ENCODE measurements at regions of chr6 and their contacts with region 1.

Region 1: DNA sequence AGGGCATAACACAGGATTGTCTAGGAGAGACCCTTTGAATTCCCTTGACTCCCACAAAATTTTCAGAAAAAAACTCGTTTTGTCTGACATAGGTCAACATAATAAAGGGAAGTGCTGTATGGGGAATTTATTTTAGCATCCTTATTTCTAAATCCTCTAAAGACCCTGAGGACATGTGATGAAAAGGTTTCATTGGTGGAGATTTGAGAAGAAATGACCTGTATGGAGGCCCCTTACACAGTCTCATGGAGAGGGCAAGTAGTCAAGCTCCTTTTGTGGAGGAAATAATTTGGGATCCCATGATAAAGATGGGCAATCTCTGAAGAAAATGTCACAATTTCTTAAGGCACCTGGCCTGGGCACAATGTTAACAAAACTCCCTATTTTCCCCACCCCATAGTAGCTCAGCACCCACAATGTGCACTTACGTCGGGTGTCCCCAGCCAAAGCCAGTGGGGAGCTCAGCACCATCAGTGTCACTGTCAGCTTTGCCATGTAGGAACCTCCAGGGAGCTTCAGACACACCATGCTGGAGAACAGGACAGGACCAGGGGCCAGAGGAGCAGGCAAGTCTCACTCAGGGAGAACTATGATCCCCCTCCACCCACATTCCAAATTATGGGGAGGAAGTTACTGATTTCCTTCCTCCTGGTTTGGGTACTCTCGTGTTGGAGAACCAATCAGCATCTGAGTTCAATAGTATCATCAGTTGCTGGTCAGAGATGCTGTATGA is at the start of gene HLA-DRB5:
- DNase-seq: peak in 1 of 2 donors; percentile 45
- ATAC-seq: peak in 2 of 4 donors; percentile 37 to 61
- H3K4me3 ChIP-seq: no peak within 1 kb of the TSS
- H3K27ac ChIP-seq: no peak within 1 kb of the TSS
- H3K4me1 ChIP-seq: no peaks in the 10 kb centered on the region
- H3K27me3 ChIP-seq: no peaks in the 10 kb centered on the region
- CTCF ChIP-seq: no peak
- total RNA-seq, gene HLA-DRB5: 6.5 to 23.9 (median 12.5) TPM

Region 2: GRCh38 chr6:32472781-32473375 is 57.0 kb before region 1 on chr6:
- intact Hi-C with region 1: loop called in 1 of 2 experiments (anchors 10 kb)
- DNase-seq: no peak
- ATAC-seq: no peak
- H3K4me3 ChIP-seq: no peak overlapping the region
- H3K27ac ChIP-seq: no peak overlapping the region
- H3K4me1 ChIP-seq: no peaks in the 10 kb centered on the region
- H3K27me3 ChIP-seq: peaks cover 0 to 3% (median 0%) of the 10 kb centered on the region in 3 donors
- CTCF ChIP-seq: no peak

Region 3: GRCh38 chr6:32483968-32484636 is 45.8 kb before region 1 on chr6:
- intact Hi-C with region 1: loop called (anchors 2 to 10 kb)
- DNase-seq: no peak
- ATAC-seq: no peak
- H3K4me3 ChIP-seq: no peak overlapping the region
- H3K27ac ChIP-seq: no peak overlapping the region
- H3K4me1 ChIP-seq: no peaks in the 10 kb centered on the region
- H3K27me3 ChIP-seq: no peaks in the 10 kb centered on the region
- CTCF ChIP-seq: no peak

Region 4: DNA sequence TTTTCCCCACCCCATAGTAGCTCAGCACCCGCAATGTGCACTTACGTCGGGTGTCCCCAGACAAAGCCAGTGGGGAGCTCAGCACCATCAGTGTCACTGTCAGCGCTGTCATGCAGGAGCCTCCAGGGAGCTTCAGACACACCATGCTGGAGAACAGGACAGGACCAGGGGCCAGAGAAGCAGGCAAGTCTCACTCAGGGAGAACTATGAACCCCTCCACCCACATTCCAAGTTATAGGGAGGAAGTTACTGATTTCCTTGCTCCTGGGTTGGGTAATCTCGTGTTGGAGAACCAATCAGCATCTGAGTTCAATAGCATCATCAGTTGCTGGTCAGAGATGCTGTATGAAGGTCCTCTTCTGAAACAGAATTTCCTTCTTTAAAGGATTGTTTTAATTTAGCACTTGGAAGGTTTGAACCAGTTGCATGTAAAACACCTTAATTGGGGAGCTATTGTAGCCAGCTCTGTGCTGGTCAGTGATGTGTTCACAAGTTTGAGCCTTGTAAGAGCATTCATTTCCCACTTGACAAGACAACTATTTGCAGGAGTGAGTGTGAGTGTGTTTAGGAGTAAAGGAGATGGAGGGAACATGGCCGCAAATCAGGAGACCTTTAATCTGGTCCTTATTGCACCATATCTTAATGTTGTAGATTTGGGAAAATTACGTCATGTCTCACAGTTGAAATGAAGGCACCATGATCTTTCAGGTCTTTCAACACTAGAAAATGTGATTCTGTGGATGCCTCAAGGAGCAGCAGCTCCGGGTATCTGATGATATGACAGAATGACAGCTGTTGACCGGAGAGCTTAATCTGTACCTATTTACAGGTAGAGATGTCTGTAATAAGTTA is 60.0 kb after region 1 on chr6 and contains the start of gene HLA-DRB1:
- intact Hi-C with region 1: loop called in 1 of 2 experiments (anchors 5 kb)
- DNase-seq: peak; percentile 15 to 57
- ATAC-seq: peak; percentile 63 to 92 (median 76)
- H3K4me3 ChIP-seq: no peak within 1 kb of the TSS
- H3K27ac ChIP-seq: no peak within 1 kb of the TSS
- H3K4me1 ChIP-seq: no peaks in the 10 kb centered on the region
- H3K27me3 ChIP-seq: no peaks in the 10 kb centered on the region
- CTCF ChIP-seq: no peak
- total RNA-seq, gene HLA-DRB1: 16.9 to 49.4 (median 29.8) TPM